ENCODE measurements at regions of chr10 and their contacts with region 1.

Region 1: GRCh38 chr10:80158598-80159127 is 26.1 kb downstream of the PLAC9 start:
- DNase-seq: peak; percentile 35 to 91 (median 70)

Region 2: DNA sequence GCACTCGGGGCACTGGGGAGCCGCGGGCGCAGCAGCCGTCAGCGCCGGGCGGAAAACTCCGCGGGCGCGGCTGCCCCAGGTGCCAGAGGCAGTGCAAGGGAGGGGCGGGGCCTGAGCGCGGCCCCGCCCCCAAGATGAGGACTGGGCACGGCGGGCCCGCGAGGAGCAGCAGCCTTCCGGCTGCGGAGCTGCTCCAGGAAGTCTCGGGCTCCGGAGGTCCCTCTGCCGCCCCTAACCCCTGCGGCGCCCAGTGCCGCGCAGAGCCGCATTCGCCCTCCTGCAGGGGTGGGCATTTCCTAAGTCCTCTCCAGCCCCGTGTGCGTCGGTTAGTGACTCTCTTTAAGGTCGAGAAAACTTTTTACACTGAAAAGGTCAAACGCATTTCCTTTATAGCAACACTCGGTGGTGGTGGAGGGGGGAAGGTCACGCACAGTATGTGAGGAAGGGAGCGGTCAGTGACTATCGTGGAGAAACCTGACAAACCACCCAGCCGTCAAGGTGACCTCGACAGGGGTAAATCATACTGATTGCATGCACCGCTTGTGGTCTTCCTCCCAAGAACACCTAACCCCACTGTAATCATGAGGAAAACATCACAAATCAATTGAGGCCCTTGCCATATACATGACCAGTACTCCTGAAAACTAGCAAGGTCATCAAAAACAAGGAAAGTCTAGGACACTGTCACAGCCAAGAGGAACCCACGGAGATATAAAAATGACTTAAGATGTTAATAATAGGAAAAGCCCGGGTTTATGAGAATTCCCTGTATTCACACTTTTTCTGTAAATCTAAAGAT is 47.0 kb after region 1 on chr10 and contains the start of gene ANXA11:
- intact Hi-C with region 1: loop called (anchors 10 kb)
- DNase-seq: peak in 39 of 42 donors; percentile 45 to 86 (median 70)

Region 3: DNA sequence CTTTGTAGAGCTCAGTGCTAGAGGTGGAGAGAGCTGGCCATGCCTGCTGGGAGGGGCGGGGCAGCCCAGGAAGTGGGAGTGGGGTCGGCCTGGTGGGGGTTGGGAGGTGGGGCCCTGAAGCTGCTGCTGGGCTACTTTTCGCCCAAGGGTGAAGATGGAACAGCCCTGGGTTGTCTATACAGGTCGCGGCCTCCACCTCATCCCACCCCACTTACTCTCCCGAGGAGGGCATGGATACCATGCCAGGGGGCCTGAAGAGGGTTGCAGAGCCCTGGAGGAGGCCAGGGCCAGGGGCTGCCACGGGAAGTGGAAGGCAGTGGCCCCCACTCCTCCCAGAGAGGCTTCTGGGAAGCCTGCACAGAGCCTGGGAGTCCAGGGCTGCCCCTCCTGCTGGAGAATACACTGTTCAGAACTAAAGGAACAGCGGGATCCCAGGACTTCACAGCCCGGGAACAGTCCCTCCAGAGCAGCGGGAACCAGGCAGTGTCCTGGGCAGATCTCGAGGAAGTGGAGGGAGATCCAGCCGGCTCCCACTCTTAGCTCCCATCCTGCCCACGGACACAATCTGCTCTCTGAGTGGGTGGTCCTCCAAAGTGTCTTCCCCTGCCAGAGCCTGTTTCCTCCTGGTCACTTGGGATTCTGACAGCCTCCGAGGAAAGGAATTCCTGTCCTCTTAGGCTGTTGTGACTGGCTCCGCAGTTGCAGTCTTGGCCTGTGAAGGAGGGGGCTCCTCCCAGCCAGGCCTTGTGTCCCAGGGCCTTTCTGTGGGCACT is 107.3 kb after region 1 on chr10:
- intact Hi-C with region 1: no loop called
- DNase-seq: no peak